ENCODE measurements at regions of chr9 and their contacts with region 1.

Region 1: DNA sequence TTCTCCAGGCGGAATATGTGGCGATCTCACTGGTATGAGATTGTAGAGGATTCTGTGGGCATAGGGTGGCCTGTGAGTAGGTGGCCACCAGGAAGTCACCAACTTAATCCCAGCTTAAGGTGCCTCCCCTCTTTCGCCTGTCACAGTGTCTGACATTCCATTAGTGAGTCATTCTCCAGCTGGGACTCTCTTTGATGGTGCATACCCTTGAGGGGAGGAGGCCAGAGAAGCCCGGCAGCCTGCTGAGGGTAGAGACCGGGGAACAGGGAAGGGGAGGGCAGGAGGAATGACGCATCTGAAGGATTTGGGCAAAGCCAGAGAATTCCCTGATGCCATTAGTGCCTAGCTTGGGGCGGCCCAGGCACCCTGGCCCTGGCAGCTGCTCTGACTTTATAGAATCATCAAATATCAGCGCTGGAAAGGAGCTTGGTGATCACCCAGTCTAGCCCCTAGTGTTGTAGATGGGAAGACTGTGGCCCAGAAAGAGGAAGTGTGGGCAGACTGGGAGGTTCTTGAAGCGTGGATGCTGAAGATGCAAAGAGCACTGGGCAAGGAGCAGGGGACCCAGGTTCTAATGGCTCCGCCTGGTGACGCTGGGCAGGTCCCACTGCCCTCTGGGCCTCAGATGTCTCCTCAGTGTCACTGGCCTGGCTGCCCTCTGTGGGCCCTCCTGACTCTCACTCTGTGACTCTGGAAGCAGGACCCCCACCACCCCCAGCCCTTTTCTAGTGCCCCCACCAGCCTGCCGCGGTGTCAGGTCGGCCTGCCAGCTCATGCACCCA is 41.4 kb downstream of the DAB2IP start:
- DNase-seq: no peak

Region 2: DNA sequence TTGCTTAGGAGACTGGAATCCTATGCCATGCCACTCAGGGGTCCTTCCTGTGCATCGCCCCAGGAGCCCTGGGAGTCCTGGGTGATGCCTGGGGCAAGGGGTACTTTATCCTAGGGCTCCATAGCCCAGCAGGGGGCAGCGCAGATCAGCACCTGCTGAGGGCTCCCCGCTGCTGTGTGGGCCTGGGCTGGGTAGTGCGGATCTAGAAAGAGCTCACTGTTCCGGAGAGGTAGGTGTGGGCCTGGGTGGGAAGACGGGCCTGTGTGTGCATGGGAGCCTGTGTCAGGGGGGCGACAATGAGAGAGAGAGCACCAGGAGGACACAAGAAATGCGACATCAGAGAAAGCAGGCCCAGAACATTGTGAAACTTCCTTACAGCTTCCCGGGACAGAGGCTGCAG is 52.7 kb before region 1 on chr9:
- intact Hi-C with region 1: loop called (anchors 5 kb)
- DNase-seq: peak; percentile 83

Region 3: DNA sequence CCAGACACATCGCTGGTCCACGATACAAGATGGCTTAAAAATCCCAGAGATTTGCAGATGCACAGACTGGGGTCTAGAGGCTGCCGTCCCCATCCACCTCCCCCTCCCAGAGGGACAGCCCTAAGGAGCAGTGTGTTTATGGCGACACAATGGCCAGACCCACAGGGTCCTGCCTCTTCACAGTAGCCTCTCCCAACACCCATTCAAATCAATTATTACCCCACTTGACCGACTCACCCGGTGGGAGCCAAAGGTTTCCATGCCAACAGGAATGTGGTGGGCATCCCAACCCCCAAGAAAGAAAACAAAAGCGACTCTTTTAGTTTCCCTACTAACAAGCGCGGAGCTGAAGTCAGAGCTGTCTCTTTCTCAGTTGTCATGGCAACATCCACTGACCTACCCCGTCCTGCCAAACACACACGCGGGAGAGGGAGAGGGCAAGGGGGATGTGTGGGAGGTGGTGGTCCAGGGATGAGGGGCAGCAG is 191.3 kb after region 1 on chr9:
- intact Hi-C with region 1: no loop called
- DNase-seq: no peak